ENCODE measurements at regions of chr6 and their contacts with region 1.

Region 1: GRCh38 chr6:106339334-106340029 is 13.9 kb upstream of the ATG5 start:
- DNase-seq: peak in 1 of 5 donors; percentile 27
- H3K4me3 ChIP-seq: no peak overlapping the region
- H3K27ac ChIP-seq: no peak overlapping the region
- H3K4me1 ChIP-seq: no peaks in the 10 kb centered on the region
- H3K27me3 ChIP-seq: no peaks in the 10 kb centered on the region
- CTCF ChIP-seq: no peak
- EP300 ChIP-seq: no peak
- POLR2A ChIP-seq: no peak

Region 2: GRCh38 chr6:106560996-106561685 is 221.7 kb after region 1 on chr6:
- intact Hi-C with region 1: loop called in 1 of 4 experiments (anchors 10 kb)
- DNase-seq: no peak
- H3K4me3 ChIP-seq: no peak overlapping the region
- H3K27ac ChIP-seq: no peak overlapping the region
- H3K4me1 ChIP-seq: no peaks in the 10 kb centered on the region
- H3K27me3 ChIP-seq: no peaks in the 10 kb centered on the region
- CTCF ChIP-seq: no peak
- EP300 ChIP-seq: no peak
- POLR2A ChIP-seq: no peak